ENCODE measurements at regions of chr14 and their contacts with region 1.

Region 1: DNA sequence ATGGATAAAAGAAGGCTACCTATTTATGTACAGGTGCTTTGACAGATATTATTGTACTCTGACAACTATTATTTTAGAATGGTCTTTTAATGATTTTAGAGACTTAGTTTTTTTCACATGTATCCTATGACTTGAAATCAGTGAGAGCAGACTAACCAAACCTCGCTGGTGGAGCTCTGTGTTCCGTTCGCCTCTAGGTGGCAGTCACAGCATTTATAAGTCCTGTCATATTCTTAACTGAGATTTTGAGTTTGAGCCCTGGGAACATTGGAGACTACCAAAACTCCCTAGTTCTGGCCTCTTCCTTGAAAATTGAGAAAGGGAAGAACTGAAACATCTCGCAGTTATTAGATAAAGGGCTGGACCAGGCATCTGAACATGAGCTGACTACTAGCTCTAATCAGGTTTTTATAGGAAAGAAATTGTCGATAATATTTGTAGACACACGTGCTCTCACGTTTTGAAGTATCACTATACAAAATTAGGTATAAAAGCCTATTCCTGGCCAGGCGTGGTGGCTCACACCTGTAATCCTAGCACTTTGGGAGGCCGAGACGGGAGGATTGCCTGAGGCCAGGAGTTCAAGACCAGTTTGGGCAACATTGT is 48.3 kb downstream of the TTLL5 start:
- DNase-seq: peak; percentile 76
- H3K4me3 ChIP-seq: no peak overlapping the region
- H3K27ac ChIP-seq: no peak overlapping the region
- H3K4me1 ChIP-seq: no peaks in the 10 kb centered on the region
- CTCF ChIP-seq: peak; percentile 99

Region 2: DNA sequence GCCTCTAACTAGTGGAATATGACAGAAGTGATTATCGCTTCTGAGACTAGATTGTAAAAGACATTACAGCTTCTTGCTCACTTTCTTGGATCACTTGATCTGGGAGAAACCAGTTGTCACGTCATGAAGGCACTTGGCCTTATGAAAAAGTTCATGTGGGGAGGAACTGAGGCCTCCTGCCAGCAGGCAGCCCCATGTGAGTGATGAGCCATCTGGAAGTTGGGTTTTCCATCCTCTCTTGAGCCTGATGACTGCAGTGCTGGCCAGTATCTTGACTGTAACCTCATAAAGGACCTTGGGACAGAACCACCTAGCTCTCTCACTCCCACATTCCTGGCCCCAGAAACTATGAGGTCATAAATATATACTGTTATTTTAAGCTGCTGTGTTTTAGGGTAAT is 20.3 kb before region 1 on chr14:
- CTCF ChIA-PET with region 1: no interaction called
- POLR2A ChIA-PET with region 1: no interaction called
- intact Hi-C with region 1: no loop called
- DNase-seq: no peak
- H3K4me3 ChIP-seq: no peak overlapping the region
- H3K27ac ChIP-seq: no peak overlapping the region
- H3K4me1 ChIP-seq: no peaks in the 10 kb centered on the region
- CTCF ChIP-seq: no peak

Region 3: GRCh38 chr14:75757644-75758402 is 48.5 kb after region 1 on chr14:
- CTCF ChIA-PET with region 1: no interaction called
- POLR2A ChIA-PET with region 1: interaction called, 11 read pairs
- intact Hi-C with region 1: no loop called
- DNase-seq: no peak
- H3K4me3 ChIP-seq: no peak overlapping the region
- H3K27ac ChIP-seq: no peak overlapping the region
- H3K4me1 ChIP-seq: no peaks in the 10 kb centered on the region
- CTCF ChIP-seq: no peak

Region 4: DNA sequence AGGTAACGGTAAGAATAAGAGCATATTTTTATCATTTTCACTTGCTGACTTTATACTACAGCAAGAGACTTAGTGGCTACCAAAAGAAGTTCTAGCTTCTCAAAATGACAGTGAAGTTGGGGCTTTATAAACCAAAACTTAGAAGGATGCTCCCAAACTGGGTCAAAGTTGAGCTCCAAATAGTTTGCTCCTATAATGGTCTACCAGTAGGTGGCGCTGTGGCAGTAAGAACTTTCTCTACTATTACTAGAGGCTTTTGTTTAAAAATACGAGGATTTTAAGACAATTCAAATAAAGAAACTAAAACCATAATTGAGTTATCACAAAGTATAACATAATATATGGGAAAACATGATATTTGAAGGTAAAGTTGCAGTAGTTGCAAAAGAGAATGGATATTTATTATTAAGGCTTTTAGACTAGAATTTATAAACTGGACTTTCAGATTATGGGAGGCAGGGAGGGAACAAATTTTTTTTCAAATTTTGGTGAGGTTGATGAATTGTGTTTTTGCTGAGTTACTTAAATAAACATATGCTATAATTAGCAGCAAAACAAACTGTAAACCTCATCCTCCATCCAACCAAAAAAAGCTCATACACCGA is 197.5 kb after region 1 on chr14:
- CTCF ChIA-PET with region 1: no interaction called
- POLR2A ChIA-PET with region 1: no interaction called
- intact Hi-C with region 1: loop called (anchors 10 kb)
- DNase-seq: peak; percentile 76
- H3K4me3 ChIP-seq: no peak overlapping the region
- H3K27ac ChIP-seq: no peak overlapping the region
- H3K4me1 ChIP-seq: no peaks in the 10 kb centered on the region
- CTCF ChIP-seq: peak; percentile 99

Region 5: DNA sequence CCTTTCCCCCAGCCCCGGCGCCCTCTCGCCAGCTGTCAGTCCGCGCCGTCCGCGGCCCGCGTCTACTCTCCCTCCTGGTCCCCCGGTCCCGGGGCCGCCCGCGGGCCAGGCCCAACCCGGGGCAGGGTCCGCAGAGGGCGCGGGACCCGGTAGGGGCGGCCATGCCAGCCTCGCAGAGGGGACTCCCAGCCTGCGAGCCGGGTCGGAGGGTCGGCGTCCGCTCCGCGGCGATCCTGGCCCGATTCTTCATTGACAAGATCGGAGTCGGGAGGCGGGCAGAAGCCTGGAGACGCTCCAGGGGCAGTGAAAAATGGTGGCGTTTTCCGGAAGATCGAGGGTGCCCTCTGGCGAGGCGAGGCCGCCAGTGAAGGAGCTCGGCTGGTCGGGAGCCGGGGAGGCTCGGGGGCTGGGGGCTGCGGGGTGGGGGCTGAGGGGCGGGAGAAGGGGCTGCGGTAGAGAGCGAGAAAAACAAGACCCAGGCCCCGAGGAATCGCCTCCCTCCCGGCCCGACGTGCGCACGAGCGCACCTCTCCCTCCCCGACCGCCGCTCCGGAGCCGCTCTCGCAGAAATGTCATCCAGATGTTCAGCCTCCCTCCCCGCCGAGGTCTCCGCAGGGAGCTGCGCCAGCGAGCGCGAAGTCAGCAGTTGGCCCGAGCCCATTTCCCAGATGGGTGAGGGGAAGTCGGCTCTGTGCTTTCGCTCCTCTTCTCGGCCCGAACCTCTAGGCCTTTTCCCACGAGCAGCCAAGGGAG is 273.1 kb after region 1 on chr14:
- CTCF ChIA-PET with region 1: interaction called, 3 read pairs
- POLR2A ChIA-PET with region 1: interaction called, 4 read pairs
- intact Hi-C with region 1: loop called (anchors 1 kb)
- DNase-seq: peak; percentile 78
- H3K4me3 ChIP-seq: peak overlapping the region; percentile 76
- H3K27ac ChIP-seq: no peak overlapping the region
- H3K4me1 ChIP-seq: peaks cover 42% of the 10 kb centered on the region
- CTCF ChIP-seq: peak; percentile 70

Region 6: DNA sequence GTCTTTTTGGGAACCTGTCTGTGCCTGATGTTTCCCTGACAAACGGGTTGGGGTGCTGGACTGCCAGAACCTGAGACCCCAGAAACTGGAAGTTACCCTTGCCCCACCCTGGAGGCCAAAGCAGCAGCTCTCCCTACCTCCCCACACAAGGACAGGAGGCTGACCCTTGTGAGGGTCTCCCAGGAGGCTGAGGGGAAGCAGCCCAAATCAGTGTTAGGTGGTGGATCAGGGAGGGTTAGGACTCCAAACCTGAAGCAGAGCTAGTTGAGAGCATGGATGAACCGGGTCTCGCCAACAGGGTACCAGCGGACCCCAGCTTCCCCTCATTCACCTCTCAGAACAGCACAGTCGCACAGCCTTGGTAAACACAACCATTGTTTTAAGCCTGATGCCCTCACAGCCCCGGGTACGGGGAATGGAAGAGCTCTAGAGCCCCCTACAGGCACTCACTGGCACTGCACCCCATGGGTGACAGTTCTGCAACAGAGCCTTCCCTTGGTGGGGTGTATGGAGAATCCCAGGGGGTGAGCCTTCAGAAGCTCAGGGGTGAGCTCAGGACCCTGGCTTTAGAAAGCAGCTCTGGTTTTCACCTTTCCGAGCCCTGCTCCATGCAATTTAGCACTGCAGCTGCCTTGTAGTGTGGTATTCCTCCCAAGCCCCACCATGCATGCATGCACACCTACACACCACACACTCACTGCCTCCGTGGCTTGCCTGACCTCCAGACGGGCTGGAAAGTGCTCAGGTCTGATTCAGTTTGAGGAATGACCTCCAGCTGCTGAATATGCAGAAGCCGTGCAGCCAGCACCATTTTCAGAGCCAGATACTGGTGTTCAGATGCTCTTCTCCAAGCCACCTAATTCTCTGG is 677.8 kb after region 1 on chr14:
- CTCF ChIA-PET with region 1: no interaction called
- POLR2A ChIA-PET with region 1: no interaction called
- intact Hi-C with region 1: loop called (anchors 5 kb)
- DNase-seq: peak; percentile 70
- H3K4me3 ChIP-seq: no peak overlapping the region
- H3K27ac ChIP-seq: no peak overlapping the region
- H3K4me1 ChIP-seq: no peaks in the 10 kb centered on the region
- CTCF ChIP-seq: peak; percentile 91